PC-3 (cell line): ENCODE measurements at regions of chr6 and their contacts with region 1.

Region 1: DNA sequence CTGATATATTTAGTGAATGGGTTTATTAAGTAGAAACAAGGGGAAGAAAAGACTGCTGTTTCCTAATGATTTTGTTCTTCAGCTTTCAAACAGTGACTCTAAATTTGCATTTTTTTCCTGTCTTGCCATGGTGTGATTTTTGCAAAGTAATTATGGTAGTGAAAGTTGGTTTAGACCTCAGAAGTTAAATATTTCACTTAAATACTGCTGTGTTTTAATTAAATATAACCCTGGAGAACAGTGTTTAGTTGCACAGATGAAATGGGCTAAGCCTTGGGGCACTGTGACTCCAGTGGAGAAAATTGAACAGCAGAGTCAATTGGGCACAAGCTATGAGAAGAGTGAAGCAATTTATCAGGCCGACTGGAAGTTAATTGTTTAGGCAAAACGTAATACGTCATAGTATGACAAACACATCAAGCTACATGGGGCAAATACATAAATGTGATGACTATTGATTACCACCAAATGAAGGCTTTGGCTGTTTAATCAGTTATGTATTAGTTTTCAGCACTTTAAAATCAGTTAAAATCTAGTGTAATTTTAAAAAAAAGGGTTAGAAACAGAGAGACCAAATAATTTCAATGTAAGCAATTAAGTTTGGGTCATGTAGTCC is 111.2 kb upstream of the MCHR2 start:
- DNase-seq: no peak
- ATAC-seq: no peak
- H3K4me3 ChIP-seq: no peak overlapping the region
- H3K27ac ChIP-seq: no peak overlapping the region
- H3K4me1 ChIP-seq: peaks cover 27% of the 10 kb centered on the region
- H3K27me3 ChIP-seq: no peaks in the 10 kb centered on the region
- CTCF ChIP-seq: no peak

Region 2: GRCh38 chr6:100657678-100658330 is 552.6 kb after region 1 on chr6:
- CTCF ChIA-PET with region 1: no interaction called
- POLR2A ChIA-PET with region 1: no interaction called
- intact Hi-C with region 1: loop called (anchors 1 kb)
- DNase-seq: peak; percentile 61
- ATAC-seq: no peak; the same call in 1 of the 2 replicates
- H3K4me3 ChIP-seq: no peak overlapping the region
- H3K27ac ChIP-seq: no peak overlapping the region
- H3K4me1 ChIP-seq: peaks cover 2% of the 10 kb centered on the region
- H3K27me3 ChIP-seq: no peaks in the 10 kb centered on the region
- CTCF ChIP-seq: peak; percentile 87